AG04449 (cell line): ENCODE measurements at regions of chr1 and their contacts with region 1.

Region 1: GRCh38 chr1:150561974-150562445 is 12.8 kb downstream of the ADAMTSL4 start:
- DNase-seq: peak; percentile 57
- H3K4me3 ChIP-seq: peak overlapping the region; percentile 60
- CTCF ChIP-seq: no peak

Region 2: GRCh38 chr1:150486964-150487762 is 74.8 kb before region 1 on chr1 and contains the start of gene TARS2:
- CTCF ChIA-PET with region 1: interaction called, 15 read pairs
- POLR2A ChIA-PET with region 1: no interaction called
- DNase-seq: peak; percentile 91
- H3K4me3 ChIP-seq: peak within 1 kb of the TSS; percentile 86
- CTCF ChIP-seq: no peak

Region 3: DNA sequence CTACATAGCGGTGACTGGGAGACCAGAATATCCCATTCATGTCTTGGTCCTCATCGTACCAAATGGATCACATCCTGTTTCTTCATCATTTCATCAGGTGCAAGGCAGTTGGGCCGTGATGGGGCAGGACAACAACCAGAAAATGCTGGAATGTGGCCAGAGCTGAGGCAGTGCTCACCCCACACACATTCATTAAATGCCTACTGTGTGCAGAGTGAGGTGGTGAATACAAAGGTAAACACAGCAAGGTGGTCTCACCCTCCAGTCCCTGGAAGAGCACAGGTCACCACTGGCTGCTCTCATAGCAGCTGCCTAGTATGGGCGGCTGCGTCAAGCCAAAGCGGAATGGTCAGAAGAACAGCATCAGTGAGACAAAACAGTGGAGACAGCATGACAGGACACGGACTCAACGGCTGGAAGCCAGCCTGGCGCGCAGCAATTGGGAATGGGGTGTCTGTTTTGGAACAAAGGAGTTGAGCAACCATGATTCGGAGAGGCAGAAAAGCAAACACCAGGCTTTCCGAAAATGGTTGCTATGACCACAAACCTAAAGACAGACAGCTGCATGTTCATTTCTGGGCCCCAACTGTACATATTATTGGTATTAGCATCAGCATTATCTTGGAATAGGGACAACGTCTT is 18.4 kb before region 1 on chr1:
- CTCF ChIA-PET with region 1: interaction called, 120 read pairs
- POLR2A ChIA-PET with region 1: interaction called, 3 read pairs
- DNase-seq: no peak
- H3K4me3 ChIP-seq: no peak overlapping the region
- CTCF ChIP-seq: no peak

Region 4: GRCh38 chr1:150606463-150607148 is 44.6 kb after region 1 on chr1:
- CTCF ChIA-PET with region 1: interaction called, 315 read pairs
- POLR2A ChIA-PET with region 1: no interaction called
- DNase-seq: no peak
- H3K4me3 ChIP-seq: no peak overlapping the region
- CTCF ChIP-seq: no peak

Region 5: GRCh38 chr1:150808121-150808520 is 246.1 kb after region 1 on chr1 and contains the start of gene CTSK:
- CTCF ChIA-PET with region 1: interaction called, 37 read pairs
- POLR2A ChIA-PET with region 1: no interaction called
- DNase-seq: no peak
- H3K4me3 ChIP-seq: peak within 1 kb of the TSS; percentile 45
- CTCF ChIP-seq: no peak

Region 6: GRCh38 chr1:150869683-150870082 is 307.7 kb after region 1 on chr1:
- CTCF ChIA-PET with region 1: no interaction called
- POLR2A ChIA-PET with region 1: no interaction called
- DNase-seq: no peak
- H3K4me3 ChIP-seq: no peak overlapping the region
- CTCF ChIP-seq: no peak

Region 7: DNA sequence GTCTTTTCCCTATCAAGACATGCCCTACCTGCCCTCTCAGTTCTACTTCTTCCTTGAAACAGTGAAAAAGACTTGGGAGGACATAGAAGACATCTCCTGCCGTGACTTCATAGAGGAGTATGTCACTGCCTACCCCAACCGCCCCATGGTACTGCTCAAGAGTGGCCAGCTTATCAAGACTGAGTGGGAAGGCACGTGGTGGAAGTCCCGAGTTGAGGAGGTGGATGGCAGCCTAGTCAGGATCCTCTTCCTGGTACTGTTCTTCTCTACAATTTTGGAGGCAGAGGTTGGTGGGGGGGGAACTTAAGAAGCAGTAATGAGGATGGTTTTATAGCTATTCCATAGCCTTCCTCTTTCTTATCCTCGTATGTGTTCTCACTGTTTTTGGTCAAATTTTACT is 382.8 kb after region 1 on chr1:
- CTCF ChIA-PET with region 1: no interaction called
- POLR2A ChIA-PET with region 1: no interaction called
- DNase-seq: no peak
- H3K4me3 ChIP-seq: no peak overlapping the region
- CTCF ChIP-seq: no peak